ENCODE measurements at regions of chr17 and their contacts with region 1.

Region 1: DNA sequence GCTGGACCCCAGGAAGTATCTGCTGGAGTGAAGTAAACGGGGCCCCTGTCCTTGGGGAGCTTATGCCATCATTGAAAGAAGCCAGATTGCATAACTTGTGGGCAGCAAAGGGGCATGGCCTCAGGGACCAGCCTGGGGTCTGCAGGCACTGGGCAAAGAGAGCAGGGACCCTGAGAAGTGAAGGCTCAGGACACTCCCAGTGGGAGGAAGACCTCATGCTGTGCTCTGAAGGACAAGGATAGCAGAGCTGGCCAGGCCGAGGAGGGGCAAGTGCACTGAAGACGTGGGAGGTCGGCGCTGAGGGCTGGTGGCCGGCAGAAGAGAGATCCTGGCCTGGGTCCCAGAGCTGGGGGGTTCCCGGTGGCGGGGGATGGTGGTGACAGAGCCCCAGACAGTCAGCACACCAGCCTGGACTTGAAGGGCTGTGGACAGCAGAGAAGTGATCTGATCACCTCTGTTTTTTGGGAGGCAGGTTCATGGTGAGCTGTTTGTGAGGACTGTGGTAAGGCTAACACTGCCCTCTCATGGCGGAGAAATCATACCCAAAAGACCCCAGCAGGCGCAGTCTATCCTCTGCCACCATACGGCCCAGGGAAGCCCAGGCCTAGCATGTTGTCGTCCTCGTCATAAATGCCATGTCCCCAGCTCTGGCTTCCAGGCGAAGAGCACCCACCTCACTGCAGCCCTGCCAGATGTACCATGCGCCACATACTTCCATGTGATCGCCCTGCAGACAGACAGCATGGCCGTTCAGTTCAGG is 7.1 kb upstream of the CNP start:
- DNase-seq: peak; percentile 68 to 69
- H3K4me3 ChIP-seq: no peak overlapping the region
- H3K4me3 Mint-ChIP-seq: no peak overlapping the region
- H3K27ac Mint-ChIP-seq: peak overlapping the region; percentile 37
- H3K4me1 ChIP-seq: peaks cover 20% of the 10 kb centered on the region
- H3K4me1 Mint-ChIP-seq: peaks cover 16% of the 10 kb centered on the region
- H3K27me3 ChIP-seq: no peaks in the 10 kb centered on the region
- H3K27me3 Mint-ChIP-seq: no peaks in the 10 kb centered on the region
- CTCF ChIP-seq: peak; percentile 60 to 62

Region 2: GRCh38 chr17:41894791-41895331 is 64.7 kb before region 1 on chr17:
- CTCF ChIA-PET with region 1: interaction called, 7 read pairs
- POLR2A ChIA-PET with region 1: no interaction called
- intact Hi-C with region 1: loop called (anchors 5 kb)
- DNase-seq: peak; percentile 54 to 65
- H3K4me3 ChIP-seq: no peak overlapping the region
- H3K4me3 Mint-ChIP-seq: no peak overlapping the region
- H3K27ac Mint-ChIP-seq: peak overlapping the region; percentile 68
- H3K4me1 ChIP-seq: peaks cover 7% of the 10 kb centered on the region; the same call in 1 of the 2 replicates
- H3K4me1 Mint-ChIP-seq: peaks cover 24% of the 10 kb centered on the region
- H3K27me3 ChIP-seq: no peaks in the 10 kb centered on the region
- H3K27me3 Mint-ChIP-seq: no peaks in the 10 kb centered on the region
- CTCF ChIP-seq: no peak

Region 3: GRCh38 chr17:41930009-41930832 is 29.3 kb before region 1 on chr17 and contains the start of gene ODAD4:
- CTCF ChIA-PET with region 1: interaction called, 36 read pairs
- POLR2A ChIA-PET with region 1: interaction called, 6 read pairs
- intact Hi-C with region 1: loop called (anchors 1 kb)
- DNase-seq: peak; percentile 97 to 98
- H3K4me3 ChIP-seq: peak within 1 kb of the TSS; percentile 41
- H3K4me3 Mint-ChIP-seq: peak within 1 kb of the TSS; percentile 97
- H3K27ac Mint-ChIP-seq: peak within 1 kb of the TSS; percentile 98
- H3K4me1 ChIP-seq: peaks cover 4% of the 10 kb centered on the region; the same call in 1 of the 2 replicates
- H3K4me1 Mint-ChIP-seq: peaks cover 17% of the 10 kb centered on the region
- H3K27me3 ChIP-seq: no peaks in the 10 kb centered on the region
- H3K27me3 Mint-ChIP-seq: no peaks in the 10 kb centered on the region
- CTCF ChIP-seq: peak; percentile 44 to 60
- total RNA-seq, gene ODAD4: 0.98 and 1.3 TPM in 2 replicates

Region 4: GRCh38 chr17:42072323-42073187 is 113.0 kb after region 1 on chr17:
- CTCF ChIA-PET with region 1: no interaction called
- POLR2A ChIA-PET with region 1: no interaction called
- intact Hi-C with region 1: no loop called
- DNase-seq: peak in 1 of 2 experiments; percentile 52
- H3K4me3 ChIP-seq: no peak overlapping the region
- H3K4me3 Mint-ChIP-seq: no peak overlapping the region
- H3K27ac Mint-ChIP-seq: no peak overlapping the region
- H3K4me1 ChIP-seq: peaks cover 8% of the 10 kb centered on the region
- H3K4me1 Mint-ChIP-seq: no peaks in the 10 kb centered on the region
- H3K27me3 ChIP-seq: no peaks in the 10 kb centered on the region
- H3K27me3 Mint-ChIP-seq: peaks cover 3% of the 10 kb centered on the region
- CTCF ChIP-seq: peak; percentile 7 to 13

Measured in Caco-2 (cell line).